CD8-positive, alpha-beta T cell (primary cell): ENCODE measurements at regions of chr6 and their contacts with region 1.

Region 1: DNA sequence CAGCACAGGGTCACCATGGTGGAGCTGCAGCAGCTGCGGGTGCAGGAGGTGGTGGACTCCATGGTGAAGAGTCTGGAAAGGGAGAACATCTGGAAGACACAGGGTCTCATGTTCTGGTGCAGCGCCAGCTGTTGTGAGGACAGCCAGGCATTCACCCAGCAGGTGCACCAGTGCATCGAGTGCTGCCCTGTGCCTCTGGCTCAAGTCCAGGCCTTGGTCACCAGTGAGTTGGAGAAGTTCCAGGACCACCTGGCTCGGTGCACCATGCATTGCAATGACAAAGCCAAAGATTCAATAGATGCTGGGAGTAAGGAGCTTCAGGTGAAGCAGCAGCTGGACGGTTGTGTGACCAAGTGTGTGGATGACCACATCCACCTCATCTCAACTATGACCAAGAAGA is 22.9 kb upstream of the RIPK1 start:
- DNase-seq: no peak
- ATAC-seq: no peak
- H3K4me3 ChIP-seq: no peak overlapping the region
- H3K4me3 Mint-ChIP-seq: no peak overlapping the region
- H3K27ac ChIP-seq: no peak overlapping the region
- H3K27ac Mint-ChIP-seq: no peak overlapping the region
- H3K4me1 ChIP-seq: no peaks in the 10 kb centered on the region
- H3K4me1 Mint-ChIP-seq: no peaks in the 10 kb centered on the region
- H3K27me3 ChIP-seq: no peaks in the 10 kb centered on the region
- H3K27me3 Mint-ChIP-seq: no peaks in the 10 kb centered on the region
- CTCF ChIP-seq: no peak

Region 2: DNA sequence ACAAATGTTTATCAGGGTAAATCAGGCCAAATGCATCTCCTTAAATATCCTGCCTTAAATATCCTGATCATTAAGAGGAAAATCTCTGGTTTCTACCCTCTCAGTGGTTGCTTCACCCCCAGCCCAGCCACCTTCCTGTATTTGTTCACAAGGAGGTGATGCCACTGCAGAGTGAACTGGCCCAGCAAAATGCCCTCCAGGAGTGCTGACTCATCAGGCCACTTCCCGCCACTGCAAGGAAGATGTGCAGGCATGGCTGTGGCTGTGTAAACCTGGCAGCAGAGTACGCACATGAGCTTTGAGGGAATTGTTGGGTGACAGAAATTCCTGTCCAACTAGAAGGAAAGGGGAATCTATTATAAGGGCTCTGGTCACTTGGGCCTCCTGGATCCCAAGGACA is 31.9 kb before region 1 on chr6:
- CTCF ChIA-PET with region 1: no interaction called
- POLR2A ChIA-PET with region 1: no interaction called
- intact Hi-C with region 1: loop called in 1 of 2 experiments (anchors 5 kb)
- DNase-seq: peak in 1 of 9 experiments; percentile 20
- ATAC-seq: no peak
- H3K4me3 ChIP-seq: no peak overlapping the region
- H3K4me3 Mint-ChIP-seq: no peak overlapping the region
- H3K27ac ChIP-seq: no peak overlapping the region
- H3K27ac Mint-ChIP-seq: no peak overlapping the region
- H3K4me1 ChIP-seq: no peaks in the 10 kb centered on the region
- H3K4me1 Mint-ChIP-seq: no peaks in the 10 kb centered on the region
- H3K27me3 ChIP-seq: no peaks in the 10 kb centered on the region
- H3K27me3 Mint-ChIP-seq: no peaks in the 10 kb centered on the region
- CTCF ChIP-seq: no peak

Region 3: GRCh38 chr6:3117912-3118352 is 72.6 kb after region 1 on chr6:
- CTCF ChIA-PET with region 1: no interaction called
- POLR2A ChIA-PET with region 1: no interaction called
- intact Hi-C with region 1: no loop called
- DNase-seq: no peak
- ATAC-seq: no peak
- H3K4me3 ChIP-seq: peak overlapping the region; percentile 63 to 80
- H3K4me3 Mint-ChIP-seq: peak overlapping the region; percentile 92
- H3K27ac ChIP-seq: peak overlapping the region; percentile 85 to 90
- H3K27ac Mint-ChIP-seq: peak overlapping the region; percentile 96
- H3K4me1 ChIP-seq: peaks cover 12% of the 10 kb centered on the region
- H3K4me1 Mint-ChIP-seq: peaks cover 13% of the 10 kb centered on the region
- H3K27me3 ChIP-seq: no peaks in the 10 kb centered on the region
- H3K27me3 Mint-ChIP-seq: no peaks in the 10 kb centered on the region
- CTCF ChIP-seq: no peak